MCF 10A (cell line): ENCODE measurements at regions of chr11 and their contacts with region 1.

Region 1: DNA sequence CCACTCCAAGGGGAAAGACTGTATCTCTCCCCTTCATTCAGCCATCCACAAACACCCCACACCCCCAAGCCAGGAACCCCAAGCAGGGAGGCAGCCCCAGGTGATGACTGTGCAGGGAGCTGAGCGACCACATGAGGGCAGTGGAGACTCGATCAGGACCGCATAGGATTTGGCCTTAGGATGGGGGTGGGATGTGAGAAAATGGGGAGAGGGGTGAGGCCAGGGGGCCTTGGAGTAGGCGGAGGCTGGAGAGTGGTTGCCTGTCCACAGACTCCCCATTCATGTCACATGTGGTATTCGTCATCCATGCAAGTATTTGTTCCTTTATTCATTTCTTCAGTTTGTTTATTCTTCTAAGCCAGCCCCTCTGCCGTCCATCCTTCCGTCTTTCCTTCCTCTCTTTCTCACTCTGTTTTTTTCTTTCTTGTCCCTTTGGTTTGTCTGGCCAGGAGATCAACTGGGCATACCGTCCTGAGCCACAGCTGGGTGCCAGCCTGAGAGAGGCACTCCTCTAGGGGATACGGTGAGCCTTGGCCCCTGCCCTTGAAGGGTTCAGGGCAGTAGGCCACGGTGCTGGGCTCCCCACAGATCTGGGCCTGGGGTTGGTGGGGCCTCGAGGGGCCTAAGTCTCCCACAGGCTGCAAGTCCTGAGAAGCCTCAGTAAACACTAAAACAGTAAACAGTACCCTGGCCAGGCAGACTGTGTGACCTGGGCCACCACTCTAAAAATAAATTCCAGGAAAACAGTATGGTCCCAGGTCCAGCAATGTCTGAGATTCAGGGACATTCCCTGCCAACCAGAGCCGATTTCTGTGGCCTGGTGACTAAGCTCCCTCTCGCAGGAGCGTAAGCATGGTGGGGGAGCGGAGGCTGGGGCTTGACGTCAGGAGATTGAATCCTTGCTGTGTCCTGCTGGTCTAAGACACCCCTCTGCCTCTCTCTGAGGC is 2.5 kb upstream of the RHOD start:
- DNase-seq: peak; percentile 81
- H3K4me3 Mint-ChIP-seq: no peak overlapping the region
- H3K27ac Mint-ChIP-seq: peak overlapping the region; percentile 85
- H3K4me1 Mint-ChIP-seq: peaks cover 20% of the 10 kb centered on the region
- H3K27me3 Mint-ChIP-seq: no peaks in the 10 kb centered on the region
- CTCF ChIP-seq: peak; percentile 88

Region 2: DNA sequence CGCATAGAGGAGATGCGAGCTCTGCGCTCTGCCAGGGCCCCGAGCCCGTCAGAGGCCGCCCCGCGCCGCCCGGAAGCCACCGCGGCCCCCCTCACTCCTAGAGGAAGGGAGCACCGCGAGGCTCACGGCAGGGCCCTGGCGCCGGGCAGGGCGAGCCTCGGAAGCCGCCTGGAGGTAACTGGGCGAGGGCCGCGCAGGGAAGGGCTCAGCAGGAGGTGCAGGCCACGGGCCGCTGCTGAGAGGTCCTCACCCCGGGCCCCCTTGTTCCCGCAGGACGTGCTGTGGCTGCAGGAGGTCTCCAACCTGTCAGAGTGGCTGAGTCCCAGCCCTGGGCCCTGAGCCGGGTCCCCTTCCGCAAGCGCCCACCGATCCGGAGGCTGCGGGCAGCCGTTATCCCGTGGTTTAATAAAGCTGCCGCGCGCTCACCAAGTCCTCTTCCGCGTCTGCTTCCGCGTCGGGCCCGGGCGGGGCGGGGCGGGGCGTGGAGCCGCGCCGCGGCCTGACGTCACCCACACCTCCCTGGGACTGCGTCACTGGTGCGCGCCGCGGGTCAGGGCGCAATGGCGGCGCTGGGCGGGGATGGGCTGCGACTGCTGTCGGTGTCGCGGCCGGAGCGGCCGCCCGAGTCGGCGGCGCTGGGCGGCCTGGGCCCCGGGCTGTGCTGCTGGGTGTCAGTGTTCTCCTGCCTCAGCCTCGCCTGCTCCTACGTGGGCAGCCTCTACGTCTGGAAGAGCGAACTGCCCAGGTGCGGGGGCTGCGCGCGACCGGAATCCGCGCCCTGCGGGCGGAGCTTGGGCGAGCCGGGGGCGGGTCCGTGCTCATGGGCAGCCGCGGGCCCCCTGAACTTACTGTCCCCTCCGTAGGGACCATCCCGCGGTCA is 211.0 kb before region 1 on chr11 and contains the start of gene RCE1:
- CTCF ChIA-PET with region 1: interaction called, 4 read pairs
- POLR2A ChIA-PET with region 1: interaction called, 12 read pairs
- intact Hi-C with region 1: no loop called
- DNase-seq: peak; percentile 86
- H3K4me3 Mint-ChIP-seq: peak within 1 kb of the TSS; percentile 82
- H3K27ac Mint-ChIP-seq: peak within 1 kb of the TSS; percentile 94
- H3K4me1 Mint-ChIP-seq: peaks cover 28% of the 10 kb centered on the region
- H3K27me3 Mint-ChIP-seq: no peaks in the 10 kb centered on the region
- CTCF ChIP-seq: no peak
- total RNA-seq, gene RCE1: 23.3 and 27.7 TPM in 2 replicates

Region 3: GRCh38 chr11:66936311-66936711 is 117.9 kb before region 1 on chr11:
- CTCF ChIA-PET with region 1: interaction called, 3 read pairs
- POLR2A ChIA-PET with region 1: interaction called, 23 read pairs
- intact Hi-C with region 1: no loop called
- DNase-seq: peak; percentile 96
- H3K4me3 Mint-ChIP-seq: no peak overlapping the region
- H3K27ac Mint-ChIP-seq: peak overlapping the region; percentile 82
- H3K4me1 Mint-ChIP-seq: peaks cover 45% of the 10 kb centered on the region
- H3K27me3 Mint-ChIP-seq: no peaks in the 10 kb centered on the region
- CTCF ChIP-seq: no peak

Region 4: GRCh38 chr11:67027483-67028196 is 26.5 kb before region 1 on chr11:
- CTCF ChIA-PET with region 1: interaction called, 5 read pairs
- POLR2A ChIA-PET with region 1: interaction called, 30 read pairs
- intact Hi-C with region 1: no loop called
- DNase-seq: peak; percentile 71
- H3K4me3 Mint-ChIP-seq: no peak overlapping the region
- H3K27ac Mint-ChIP-seq: no peak overlapping the region
- H3K4me1 Mint-ChIP-seq: peaks cover 26% of the 10 kb centered on the region
- H3K27me3 Mint-ChIP-seq: no peaks in the 10 kb centered on the region
- CTCF ChIP-seq: no peak

Region 5: GRCh38 chr11:67167086-67167485 is 112.9 kb after region 1 on chr11:
- CTCF ChIA-PET with region 1: interaction called, 12 read pairs
- POLR2A ChIA-PET with region 1: interaction called, 4 read pairs
- intact Hi-C with region 1: loop called (anchors 1 kb)
- DNase-seq: no peak
- H3K4me3 Mint-ChIP-seq: no peak overlapping the region
- H3K27ac Mint-ChIP-seq: no peak overlapping the region
- H3K4me1 Mint-ChIP-seq: peaks cover 28% of the 10 kb centered on the region
- H3K27me3 Mint-ChIP-seq: no peaks in the 10 kb centered on the region
- CTCF ChIP-seq: no peak

Region 6: GRCh38 chr11:67303132-67303834 is 249.1 kb after region 1 on chr11 and contains the start of gene SSH3:
- CTCF ChIA-PET with region 1: no interaction called
- POLR2A ChIA-PET with region 1: interaction called, 11 read pairs
- intact Hi-C with region 1: no loop called
- DNase-seq: peak; percentile 81
- H3K4me3 Mint-ChIP-seq: peak within 1 kb of the TSS; percentile 70
- H3K27ac Mint-ChIP-seq: peak within 1 kb of the TSS; percentile 23
- H3K4me1 Mint-ChIP-seq: peaks cover 11% of the 10 kb centered on the region
- H3K27me3 Mint-ChIP-seq: no peaks in the 10 kb centered on the region
- CTCF ChIP-seq: no peak
- total RNA-seq, gene SSH3: 31.7 and 38.0 TPM in 2 replicates